PC-9 (cell line): ENCODE measurements at regions of chr14 and their contacts with region 1.

Region 1: GRCh38 chr14:45169906-45170305 is 34.2 kb downstream of the FANCM start:
- DNase-seq: no peak
- H3K4me3 ChIP-seq: no peak overlapping the region
- H3K27ac ChIP-seq: no peak overlapping the region
- H3K4me1 ChIP-seq: no peaks in the 10 kb centered on the region
- H3K27me3 ChIP-seq: no peaks in the 10 kb centered on the region
- CTCF ChIP-seq: no peak

Region 2: DNA sequence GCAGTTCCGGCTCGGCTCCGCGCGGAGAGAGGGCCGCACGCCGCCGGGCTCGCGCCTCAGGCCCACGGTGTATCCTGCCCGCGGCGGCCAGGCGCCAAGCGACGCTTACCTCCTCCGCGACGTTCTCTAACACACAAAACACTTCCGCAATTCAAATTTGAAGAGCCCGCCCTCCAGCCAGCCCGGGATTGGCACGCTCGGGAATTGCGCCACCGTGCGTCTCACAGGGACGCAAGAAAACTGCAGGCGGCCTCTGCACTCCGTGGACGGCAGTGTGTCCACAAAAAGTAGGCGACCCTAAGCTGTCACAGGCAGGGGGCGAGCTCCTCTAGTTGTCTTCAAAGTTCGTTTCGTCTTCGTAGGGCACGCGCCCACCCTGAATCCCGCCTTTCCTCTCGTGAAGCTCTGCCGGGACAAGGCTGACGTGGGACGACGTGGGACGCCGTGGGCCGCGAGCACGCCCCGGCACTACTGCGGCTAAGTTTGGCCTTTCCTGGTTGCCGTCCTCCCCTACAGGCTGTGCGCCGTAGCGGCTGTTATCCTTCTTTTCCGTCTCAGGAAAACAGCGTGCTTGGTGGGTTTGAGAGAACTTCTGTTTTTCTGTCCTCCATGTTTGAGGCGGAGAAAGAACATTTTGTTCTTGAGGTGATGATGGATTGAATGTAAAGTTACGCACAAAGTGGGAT is 83.3 kb after region 1 on chr14 and contains the start of gene MIS18BP1:
- CTCF ChIA-PET with region 1: no interaction called
- POLR2A ChIA-PET with region 1: interaction called, 17 read pairs
- intact Hi-C with region 1: no loop called
- DNase-seq: peak; percentile 93 to 94
- H3K4me3 ChIP-seq: peak within 1 kb of the TSS; percentile 94
- H3K27ac ChIP-seq: peak within 1 kb of the TSS; percentile 90
- H3K4me1 ChIP-seq: peaks cover 29% of the 10 kb centered on the region
- H3K27me3 ChIP-seq: no peaks in the 10 kb centered on the region
- CTCF ChIP-seq: peak; percentile 63
- total RNA-seq, gene MIS18BP1: 41.0 and 54.4 TPM in 2 replicates